Posterior vena cava (tissue), 2 donors: ENCODE measurements at regions of chr4 and their contacts with region 1.

Region 1: GRCh38 chr4:32073542-32073941 is 1353.4 kb downstream of the PCDH7 start:
- DNase-seq: no peak

Region 2: GRCh38 chr4:32025851-32026459 is 47.6 kb before region 1 on chr4:
- intact Hi-C with region 1: loop called in 1 of 2 experiments (anchors 2 kb)
- DNase-seq: no peak

Region 3: DNA sequence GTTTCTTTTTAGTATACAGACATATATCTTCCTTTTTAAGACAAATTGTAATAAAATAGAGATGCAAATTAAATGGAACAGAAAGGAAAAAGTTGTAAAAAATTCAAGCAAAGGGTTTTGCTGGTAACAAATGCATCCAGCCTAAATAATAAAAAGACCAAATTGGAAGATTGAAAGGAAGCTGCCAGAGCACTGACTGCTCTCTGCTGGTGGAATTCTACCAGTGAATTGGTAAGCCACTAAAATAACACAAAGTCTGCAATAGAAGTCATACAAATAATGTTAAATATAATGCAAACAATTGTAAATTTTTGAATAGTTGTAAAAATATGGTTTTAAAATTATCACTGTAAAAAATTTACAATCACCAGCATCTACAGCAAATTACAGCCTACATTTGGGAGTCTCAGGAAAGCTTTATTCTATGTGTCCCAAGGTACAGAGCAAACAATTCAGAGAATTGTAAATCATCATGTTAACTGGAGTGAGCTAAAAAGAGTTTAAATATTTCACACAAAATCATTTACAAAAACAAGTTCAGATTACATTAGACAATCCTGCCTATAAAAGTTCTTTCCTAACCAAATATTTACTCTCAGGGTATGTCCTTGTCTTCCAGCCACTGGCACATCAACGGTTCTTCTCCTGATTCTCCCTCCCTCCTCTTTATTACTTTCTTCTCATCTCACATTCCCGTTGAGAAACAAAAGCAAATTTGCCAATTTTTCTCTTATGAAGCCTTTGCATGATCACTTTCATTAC is 30.9 kb before region 1 on chr4:
- intact Hi-C with region 1: no loop called
- DNase-seq: no peak